Activated CD4-positive, alpha-beta memory T cell treated with anti-CD3 and anti-CD28 coated beads for 36 hours (primary cell): ENCODE measurements at regions of chr20 and their contacts with region 1.

Region 1: GRCh38 chr20:57351042-57351783 is at the start of gene RAE1:
- DNase-seq: peak; percentile 95
- H3K4me3 Mint-ChIP-seq: peak within 1 kb of the TSS; percentile 90
- H3K27ac Mint-ChIP-seq: peak within 1 kb of the TSS; percentile 85
- H3K4me1 Mint-ChIP-seq: peaks cover 23% of the 10 kb centered on the region
- H3K27me3 Mint-ChIP-seq: no peaks in the 10 kb centered on the region
- total RNA-seq, gene RAE1: 33.7 to 38.2 TPM

Region 2: DNA sequence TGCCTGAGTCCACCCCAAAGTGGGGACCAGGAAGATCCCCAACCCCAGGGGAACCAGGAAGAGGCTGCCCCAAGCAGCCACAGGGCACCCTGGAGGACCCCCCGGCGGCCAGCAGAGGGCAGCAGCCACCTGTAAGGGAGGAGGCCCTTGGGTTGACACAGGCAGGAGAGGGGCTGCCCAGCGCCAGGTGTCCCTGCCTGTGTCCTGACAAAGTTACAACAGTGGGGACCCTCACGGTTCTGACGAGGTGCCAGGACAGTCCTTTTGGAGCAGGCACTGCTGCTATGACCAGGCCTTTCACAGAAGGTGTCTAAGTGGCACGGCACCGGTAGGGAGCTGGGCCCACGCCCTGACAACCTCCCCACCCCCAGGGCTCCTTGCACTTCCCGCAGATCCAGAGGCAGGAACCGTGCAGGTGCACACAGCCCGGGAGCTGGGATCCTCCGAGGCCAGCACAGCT is 261.5 kb before region 1 on chr20:
- CTCF ChIA-PET with region 1: interaction called, 19 read pairs
- POLR2A ChIA-PET with region 1: no interaction called
- intact Hi-C with region 1: loop called (anchors 1 kb)
- DNase-seq: peak; percentile 76
- H3K4me3 Mint-ChIP-seq: no peak overlapping the region
- H3K27ac Mint-ChIP-seq: no peak overlapping the region
- H3K4me1 Mint-ChIP-seq: peaks cover 11% of the 10 kb centered on the region
- H3K27me3 Mint-ChIP-seq: peaks cover 10% of the 10 kb centered on the region

Region 3: GRCh38 chr20:57272883-57273535 is 78.2 kb before region 1 on chr20:
- CTCF ChIA-PET with region 1: no interaction called
- POLR2A ChIA-PET with region 1: no interaction called
- intact Hi-C with region 1: no loop called
- DNase-seq: no peak
- H3K4me3 Mint-ChIP-seq: no peak overlapping the region
- H3K27ac Mint-ChIP-seq: no peak overlapping the region
- H3K4me1 Mint-ChIP-seq: no peaks in the 10 kb centered on the region
- H3K27me3 Mint-ChIP-seq: peaks cover 24% of the 10 kb centered on the region

Region 4: DNA sequence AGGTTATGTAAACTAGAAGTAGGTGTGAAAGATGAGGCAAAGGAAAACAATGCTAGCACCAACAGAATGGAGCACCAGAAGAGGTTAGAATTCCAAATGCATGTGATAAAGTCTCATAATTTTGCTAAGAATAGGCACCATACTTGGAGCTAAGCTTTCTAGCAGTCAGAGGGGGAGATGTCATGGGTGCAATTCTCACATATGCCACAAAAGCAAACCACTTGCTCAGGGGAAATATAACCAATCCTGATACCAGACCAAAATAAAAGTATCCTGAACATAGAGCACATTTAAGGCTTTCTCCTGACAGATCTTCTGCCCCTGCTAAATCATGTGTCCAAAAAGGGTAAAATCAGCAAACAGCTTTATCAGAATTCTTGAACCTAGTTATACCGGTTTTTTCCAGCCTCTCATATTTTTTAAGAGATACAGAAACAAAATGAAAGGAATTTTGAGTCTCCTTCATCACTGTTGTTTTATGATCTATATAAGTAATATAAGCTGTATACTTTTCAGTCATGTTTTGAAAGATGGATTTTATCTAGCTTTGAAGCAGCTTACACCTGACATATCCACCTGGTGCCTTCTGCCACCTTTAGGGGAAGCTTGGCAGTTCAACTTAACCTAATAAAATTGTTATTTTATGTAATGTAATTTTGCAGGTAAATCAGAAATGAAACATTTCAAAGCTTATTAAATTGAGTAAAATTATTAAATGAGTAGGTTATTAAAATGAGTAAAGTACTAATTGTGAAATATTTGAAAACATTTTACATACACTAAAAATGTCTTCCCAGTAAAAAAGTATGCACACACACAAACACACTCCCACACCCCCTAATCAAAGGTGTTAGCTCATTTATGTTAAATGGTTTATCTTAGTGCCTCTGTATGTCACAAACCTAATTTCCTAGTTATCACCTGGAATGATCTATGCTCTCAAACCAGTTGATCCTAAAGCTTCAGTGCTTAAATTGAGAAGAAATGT is 18.8 kb before region 1 on chr20:
- CTCF ChIA-PET with region 1: interaction called, 15 read pairs
- POLR2A ChIA-PET with region 1: no interaction called
- intact Hi-C with region 1: no loop called
- DNase-seq: no peak
- H3K4me3 Mint-ChIP-seq: no peak overlapping the region
- H3K27ac Mint-ChIP-seq: no peak overlapping the region
- H3K4me1 Mint-ChIP-seq: no peaks in the 10 kb centered on the region
- H3K27me3 Mint-ChIP-seq: peaks cover 33% of the 10 kb centered on the region

Region 5: DNA sequence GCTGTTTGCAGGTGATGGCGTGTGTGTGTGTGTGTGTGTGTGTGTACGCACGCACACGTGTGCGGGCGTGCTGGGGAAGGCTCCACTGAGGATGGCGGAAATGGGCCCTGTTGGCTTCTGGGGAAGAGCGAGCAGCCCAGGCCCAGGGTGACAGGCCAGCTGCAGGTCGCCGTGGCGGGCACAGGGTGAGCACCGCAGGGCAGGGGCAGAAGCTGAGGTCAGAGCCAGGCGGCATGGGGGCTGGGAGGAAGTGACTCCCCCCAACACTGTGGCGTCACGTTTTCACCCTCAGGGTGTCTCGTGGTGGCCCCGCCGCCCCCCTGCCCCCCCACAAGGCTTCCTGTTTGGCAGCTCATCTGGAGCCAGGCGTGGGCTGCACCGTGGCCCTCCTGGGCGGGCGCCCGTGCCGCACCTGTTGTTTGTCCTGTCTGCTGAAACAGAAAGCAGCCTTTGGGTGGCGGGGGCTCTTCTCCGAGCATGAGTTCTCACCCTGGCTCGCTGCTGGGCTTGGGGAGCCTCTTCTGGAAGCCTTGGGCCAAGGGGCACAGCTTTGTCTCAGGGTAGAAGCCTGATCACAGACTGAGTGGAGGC is 47.1 kb after region 1 on chr20:
- CTCF ChIA-PET with region 1: no interaction called
- POLR2A ChIA-PET with region 1: interaction called, 6 read pairs
- intact Hi-C with region 1: loop called (anchors 2 kb)
- DNase-seq: peak; percentile 93
- H3K4me3 Mint-ChIP-seq: peak overlapping the region; percentile 78
- H3K27ac Mint-ChIP-seq: peak overlapping the region; percentile 96
- H3K4me1 Mint-ChIP-seq: peaks cover 88% of the 10 kb centered on the region
- H3K27me3 Mint-ChIP-seq: no peaks in the 10 kb centered on the region

Region 6: DNA sequence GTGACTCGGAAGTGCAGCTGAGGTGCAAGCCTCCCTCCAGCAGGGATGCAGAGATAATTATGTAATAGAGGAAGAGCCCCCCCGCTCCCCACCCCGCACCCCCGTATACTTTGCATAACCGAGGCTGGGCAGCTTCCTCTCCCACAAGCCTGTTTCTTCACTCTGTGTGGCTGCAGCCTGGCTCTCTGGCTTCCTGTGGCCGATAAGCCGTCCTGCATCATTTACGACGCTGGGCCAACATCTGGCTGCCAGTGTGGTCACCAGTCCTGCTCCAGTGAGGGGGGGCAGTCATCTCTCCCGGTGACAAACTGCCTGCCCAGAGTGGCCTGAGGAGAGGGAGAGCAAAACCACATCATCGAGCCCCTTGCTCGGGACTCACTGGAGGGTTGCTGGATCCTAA is 99.2 kb after region 1 on chr20:
- CTCF ChIA-PET with region 1: no interaction called
- POLR2A ChIA-PET with region 1: no interaction called
- intact Hi-C with region 1: no loop called
- DNase-seq: no peak
- H3K4me3 Mint-ChIP-seq: no peak overlapping the region
- H3K27ac Mint-ChIP-seq: no peak overlapping the region
- H3K4me1 Mint-ChIP-seq: peaks cover 18% of the 10 kb centered on the region
- H3K27me3 Mint-ChIP-seq: no peaks in the 10 kb centered on the region

Region 7: DNA sequence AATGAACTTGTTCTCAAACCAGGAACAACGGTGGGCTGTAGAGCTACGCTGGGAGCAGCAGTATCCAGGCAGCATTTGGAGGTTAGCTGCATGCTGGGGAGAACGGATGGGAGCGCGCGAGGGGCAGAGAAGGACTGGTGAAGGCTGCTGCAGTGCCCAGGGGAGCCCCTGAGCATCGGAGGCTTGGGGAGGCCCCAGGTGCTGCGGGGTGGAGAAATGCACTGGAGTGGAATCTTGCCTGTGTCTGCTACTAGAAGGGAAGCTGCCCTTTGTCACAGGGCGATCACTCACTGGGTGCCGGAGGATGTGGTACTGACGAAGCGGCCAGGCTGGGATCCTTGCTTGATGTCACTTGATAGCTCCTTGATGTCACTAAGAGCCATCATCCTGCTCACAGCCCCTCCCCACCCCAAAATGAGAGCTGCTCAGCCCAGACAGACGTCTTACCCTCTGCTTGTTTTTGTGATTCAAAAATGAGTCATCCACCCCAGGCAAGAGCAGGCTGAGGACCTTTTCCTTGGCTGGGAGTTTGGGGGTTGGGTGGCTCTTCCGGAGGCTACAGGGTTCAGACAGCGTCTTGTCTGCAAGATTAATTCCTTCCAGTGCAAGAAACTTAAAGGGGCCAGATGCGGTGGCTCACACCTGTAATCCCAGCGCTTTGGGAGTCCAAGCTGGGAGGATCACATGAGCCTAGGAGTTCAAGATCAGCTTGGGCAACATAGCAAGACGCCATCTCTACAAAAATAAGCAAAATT is 421.2 kb after region 1 on chr20:
- CTCF ChIA-PET with region 1: no interaction called
- POLR2A ChIA-PET with region 1: no interaction called
- intact Hi-C with region 1: no loop called
- DNase-seq: peak; percentile 60
- H3K4me3 Mint-ChIP-seq: no peak overlapping the region
- H3K27ac Mint-ChIP-seq: no peak overlapping the region
- H3K4me1 Mint-ChIP-seq: peaks cover 10% of the 10 kb centered on the region
- H3K27me3 Mint-ChIP-seq: peaks cover 5% of the 10 kb centered on the region